ENCODE measurements at regions of chr1 and their contacts with region 1.

Region 1: GRCh38 chr1:212455803-212456528 is 23.2 kb downstream of the NENF start:
- DNase-seq: no peak
- ATAC-seq: peak; percentile 91
- H3K4me3 ChIP-seq: no peak overlapping the region
- H3K27ac ChIP-seq: no peak overlapping the region
- H3K4me1 ChIP-seq: no peaks in the 10 kb centered on the region
- H3K27me3 ChIP-seq: no peaks in the 10 kb centered on the region; a peak in 1 of 4 replicates
- CTCF ChIP-seq: peak; percentile 95 to 99 (median 96)
- EP300 ChIP-seq: no peak
- POLR2A ChIP-seq: no peak
- RAD21 ChIP-seq: peak; percentile 100

Region 2: GRCh38 chr1:212040629-212041028 is 415.3 kb before region 1 on chr1:
- CTCF ChIA-PET with region 1: interaction called, 42 read pairs
- POLR2A ChIA-PET with region 1: interaction called, 4 read pairs
- RAD21 ChIA-PET with region 1: interaction called, 27 read pairs
- SMC1A ChIA-PET with region 1: interaction called, 34 read pairs
- in situ Hi-C with region 1: no loop called
- intact Hi-C with region 1: no loop called
- DNase-seq: no peak
- ATAC-seq: peak; percentile 46
- H3K4me3 ChIP-seq: peak overlapping the region; percentile 51
- H3K27ac ChIP-seq: peak overlapping the region; percentile 55; the same call in 1 of the 2 replicates
- H3K4me1 ChIP-seq: peaks cover 3% of the 10 kb centered on the region; the same call in 1 of the 2 replicates
- H3K27me3 ChIP-seq: no peaks in the 10 kb centered on the region
- CTCF ChIP-seq: no peak
- EP300 ChIP-seq: no peak
- POLR2A ChIP-seq: no peak
- RAD21 ChIP-seq: no peak

Region 3: DNA sequence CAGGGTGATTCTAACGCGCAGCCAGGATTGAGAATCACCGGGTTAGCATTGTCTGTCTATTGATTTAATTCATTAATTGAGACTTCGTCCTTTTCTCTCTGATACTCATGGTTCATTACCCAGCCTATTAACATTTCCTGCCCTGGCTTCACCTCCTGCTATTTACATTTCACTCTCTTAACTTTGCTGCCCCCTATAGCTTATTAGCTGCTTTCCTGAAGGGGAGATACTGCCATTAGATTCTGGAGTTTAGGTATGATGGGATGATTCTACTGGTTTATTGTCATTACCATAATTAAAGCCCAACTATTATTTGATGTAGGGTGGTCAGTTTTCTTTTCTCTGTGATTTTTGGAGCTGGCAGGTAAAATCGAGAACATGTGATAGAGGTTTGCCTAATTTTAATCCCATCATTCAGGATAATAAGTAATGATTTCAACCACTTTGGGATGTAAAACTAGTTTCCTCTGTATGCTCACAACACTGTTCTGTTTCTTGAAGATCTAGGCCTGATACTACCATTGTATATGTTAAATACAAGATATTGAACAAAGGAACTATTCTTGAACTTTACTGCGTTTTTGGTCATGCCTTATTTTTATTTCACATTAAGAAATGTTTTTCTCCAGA is 164.3 kb before region 1 on chr1:
- CTCF ChIA-PET with region 1: interaction called, 52 read pairs
- POLR2A ChIA-PET with region 1: no interaction called
- RAD21 ChIA-PET with region 1: interaction called, 50 read pairs
- SMC1A ChIA-PET with region 1: interaction called, 28 read pairs
- in situ Hi-C with region 1: no loop called
- intact Hi-C with region 1: loop called (anchors 5 kb)
- DNase-seq: no peak
- ATAC-seq: peak; percentile 87
- H3K4me3 ChIP-seq: peak overlapping the region; percentile 54; the same call in 1 of the 2 replicates
- H3K27ac ChIP-seq: no peak overlapping the region
- H3K4me1 ChIP-seq: peaks cover 18% of the 10 kb centered on the region
- H3K27me3 ChIP-seq: no peaks in the 10 kb centered on the region
- CTCF ChIP-seq: peak; percentile 63 to 87 (median 76); a peak in 5 of 6 replicates
- EP300 ChIP-seq: no peak
- POLR2A ChIP-seq: no peak
- RAD21 ChIP-seq: peak; percentile 93

Region 4: DNA sequence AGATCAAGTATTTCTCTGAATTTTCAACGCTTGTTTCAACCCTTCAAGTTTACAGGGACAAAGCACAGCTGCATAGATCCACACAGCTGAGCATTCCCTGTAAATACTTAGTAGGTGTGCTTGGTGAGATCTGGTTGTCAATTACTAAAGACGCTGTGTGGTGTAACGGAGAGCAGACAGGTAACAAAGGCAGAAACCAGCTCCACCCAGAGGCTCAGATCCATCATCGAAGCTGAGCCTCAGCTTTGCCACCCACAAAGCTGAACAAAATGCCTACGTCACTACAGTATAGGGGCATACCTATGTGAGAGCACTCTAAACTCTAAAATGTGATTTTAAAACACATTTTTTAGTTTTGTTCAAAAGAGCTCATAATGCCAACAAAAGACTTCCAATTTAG is 80.0 kb before region 1 on chr1:
- CTCF ChIA-PET with region 1: interaction called, 60 read pairs
- POLR2A ChIA-PET with region 1: no interaction called
- RAD21 ChIA-PET with region 1: interaction called, 18 read pairs
- SMC1A ChIA-PET with region 1: interaction called, 13 read pairs
- in situ Hi-C with region 1: no loop called
- intact Hi-C with region 1: no loop called
- DNase-seq: no peak
- ATAC-seq: no peak
- H3K4me3 ChIP-seq: no peak overlapping the region
- H3K27ac ChIP-seq: no peak overlapping the region
- H3K4me1 ChIP-seq: no peaks in the 10 kb centered on the region
- H3K27me3 ChIP-seq: no peaks in the 10 kb centered on the region
- CTCF ChIP-seq: no peak
- EP300 ChIP-seq: no peak
- POLR2A ChIP-seq: no peak
- RAD21 ChIP-seq: no peak

Region 5: DNA sequence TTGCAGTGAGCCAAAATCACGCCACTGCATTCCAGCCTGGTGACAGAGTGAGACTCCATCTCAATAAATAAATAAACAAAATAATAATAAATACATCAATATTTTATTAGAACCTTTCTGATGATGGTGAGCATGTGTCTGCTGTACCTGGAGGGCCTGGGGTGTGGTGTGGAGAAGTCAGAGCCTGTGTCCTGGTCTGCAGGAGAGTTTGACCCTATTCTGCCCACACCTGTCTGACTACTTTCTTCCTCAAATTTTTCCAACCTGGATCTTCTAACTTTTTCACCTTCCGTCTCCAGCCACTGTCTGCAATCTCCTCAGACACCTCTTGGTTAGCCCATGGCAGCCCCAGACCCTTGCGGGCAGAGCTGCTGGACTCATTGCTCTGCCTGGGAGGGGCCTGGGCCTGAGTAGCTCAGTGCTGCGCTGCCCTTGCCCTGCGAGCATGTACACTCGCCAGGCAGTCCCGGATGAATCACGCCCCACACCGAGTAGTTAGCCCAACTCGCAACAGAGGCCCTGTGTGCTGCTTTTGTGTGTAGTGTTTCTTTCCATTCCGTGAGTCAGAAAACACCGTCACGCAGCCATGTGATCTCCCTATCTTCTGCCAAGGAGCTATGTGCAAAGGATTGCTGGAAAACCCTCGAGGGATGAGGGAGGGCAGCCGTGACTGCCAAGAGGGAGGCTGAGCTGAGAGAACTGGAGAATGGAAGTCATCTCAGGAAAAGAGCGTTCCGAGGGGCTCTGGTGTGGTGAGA is 13.9 kb after region 1 on chr1:
- CTCF ChIA-PET with region 1: interaction called, 34 read pairs
- POLR2A ChIA-PET with region 1: no interaction called
- RAD21 ChIA-PET with region 1: interaction called, 7 read pairs
- SMC1A ChIA-PET with region 1: interaction called, 11 read pairs
- in situ Hi-C with region 1: no loop called
- intact Hi-C with region 1: no loop called
- DNase-seq: no peak
- ATAC-seq: no peak
- H3K4me3 ChIP-seq: no peak overlapping the region
- H3K27ac ChIP-seq: no peak overlapping the region
- H3K4me1 ChIP-seq: no peaks in the 10 kb centered on the region
- H3K27me3 ChIP-seq: no peaks in the 10 kb centered on the region
- CTCF ChIP-seq: no peak
- EP300 ChIP-seq: no peak
- POLR2A ChIP-seq: no peak
- RAD21 ChIP-seq: no peak

Region 6: DNA sequence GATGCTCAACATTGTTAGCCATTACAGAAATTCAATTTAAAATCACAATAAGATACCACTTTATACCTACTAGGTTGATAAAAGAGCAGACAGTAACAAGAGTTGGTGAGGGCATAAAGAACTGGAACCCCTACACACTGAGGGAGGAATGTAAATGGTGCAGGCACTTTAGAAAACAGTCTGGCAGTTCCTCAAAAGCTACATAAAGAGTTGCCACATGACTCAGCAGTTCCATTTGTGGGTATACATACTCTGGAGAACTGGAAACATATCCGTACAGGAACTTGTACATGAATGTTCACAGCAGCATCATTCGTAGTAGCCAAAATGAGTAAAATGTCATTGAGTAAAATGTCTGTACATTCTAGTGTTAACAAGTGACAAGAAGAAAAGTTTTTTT is 318.6 kb after region 1 on chr1:
- CTCF ChIA-PET with region 1: interaction called, 13 read pairs
- POLR2A ChIA-PET with region 1: no interaction called
- RAD21 ChIA-PET with region 1: interaction called, 3 read pairs
- SMC1A ChIA-PET with region 1: interaction called, 11 read pairs
- in situ Hi-C with region 1: no loop called
- intact Hi-C with region 1: no loop called
- DNase-seq: no peak
- ATAC-seq: peak; percentile 53
- H3K4me3 ChIP-seq: no peak overlapping the region
- H3K27ac ChIP-seq: no peak overlapping the region
- H3K4me1 ChIP-seq: peaks cover 4% of the 10 kb centered on the region; the same call in 1 of the 2 replicates
- H3K27me3 ChIP-seq: no peaks in the 10 kb centered on the region
- CTCF ChIP-seq: no peak
- EP300 ChIP-seq: no peak
- POLR2A ChIP-seq: no peak
- RAD21 ChIP-seq: no peak

Measured in GM12878 (cell line).